CD8-positive, alpha-beta T cell (primary cell): ENCODE measurements at regions of chr17 and their contacts with region 1.

Region 1: DNA sequence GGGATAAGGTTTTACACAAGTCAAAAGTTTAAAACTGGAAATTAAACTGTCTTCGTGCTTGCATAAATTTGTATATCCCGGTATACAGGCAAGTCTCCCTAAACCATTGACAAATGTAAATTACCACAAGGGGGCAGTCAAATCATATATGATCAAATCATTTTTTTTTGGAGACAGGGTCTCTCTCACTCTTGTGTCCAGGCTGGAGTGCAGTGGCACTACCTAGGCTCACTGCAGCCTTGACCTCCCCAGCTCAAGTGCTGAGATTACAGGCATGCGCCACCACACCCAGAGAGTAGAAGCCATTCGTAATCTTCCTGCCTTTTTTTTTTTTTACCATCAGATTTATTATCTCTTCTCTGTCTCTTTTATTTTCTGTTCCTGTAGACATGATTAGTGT is 18.5 kb downstream of the TOP2A start:
- DNase-seq: peak in 2 of 9 experiments; percentile 71 to 78
- ATAC-seq: peak; percentile 55
- H3K4me3 ChIP-seq: no peak overlapping the region
- H3K4me3 Mint-ChIP-seq: no peak overlapping the region
- H3K27ac ChIP-seq: no peak overlapping the region
- H3K27ac Mint-ChIP-seq: no peak overlapping the region
- H3K4me1 ChIP-seq: no peaks in the 10 kb centered on the region
- H3K4me1 Mint-ChIP-seq: peaks cover 16% of the 10 kb centered on the region
- H3K27me3 ChIP-seq: no peaks in the 10 kb centered on the region
- H3K27me3 Mint-ChIP-seq: no peaks in the 10 kb centered on the region
- CTCF ChIP-seq: peak; percentile 74

Region 2: GRCh38 chr17:40422990-40423616 is 23.9 kb after region 1 on chr17:
- CTCF ChIA-PET with region 1: no interaction called
- POLR2A ChIA-PET with region 1: no interaction called
- intact Hi-C with region 1: no loop called
- DNase-seq: peak in 1 of 9 experiments; percentile 23
- ATAC-seq: no peak
- H3K4me3 ChIP-seq: no peak overlapping the region
- H3K4me3 Mint-ChIP-seq: no peak overlapping the region
- H3K27ac ChIP-seq: no peak overlapping the region
- H3K27ac Mint-ChIP-seq: no peak overlapping the region
- H3K4me1 ChIP-seq: peaks cover 30% of the 10 kb centered on the region
- H3K4me1 Mint-ChIP-seq: peaks cover 34% of the 10 kb centered on the region
- H3K27me3 ChIP-seq: no peaks in the 10 kb centered on the region
- H3K27me3 Mint-ChIP-seq: no peaks in the 10 kb centered on the region
- CTCF ChIP-seq: no peak

Region 3: GRCh38 chr17:40474419-40475002 is 75.3 kb after region 1 on chr17:
- CTCF ChIA-PET with region 1: interaction called, 14 read pairs
- POLR2A ChIA-PET with region 1: no interaction called
- intact Hi-C with region 1: loop called in 1 of 2 experiments (anchors 2 kb)
- DNase-seq: no peak
- ATAC-seq: no peak
- H3K4me3 ChIP-seq: no peak overlapping the region
- H3K4me3 Mint-ChIP-seq: no peak overlapping the region
- H3K27ac ChIP-seq: no peak overlapping the region
- H3K27ac Mint-ChIP-seq: no peak overlapping the region
- H3K4me1 ChIP-seq: peaks cover 11% of the 10 kb centered on the region
- H3K4me1 Mint-ChIP-seq: peaks cover 10% of the 10 kb centered on the region
- H3K27me3 ChIP-seq: no peaks in the 10 kb centered on the region
- H3K27me3 Mint-ChIP-seq: no peaks in the 10 kb centered on the region
- CTCF ChIP-seq: no peak